ENCODE measurements at regions of chr1 and their contacts with region 1.

Region 1: GRCh38 chr1:36099681-36100341 is 11.1 kb downstream of the ADPRS start:
- DNase-seq: peak; percentile 76 to 90 (median 88)
- ATAC-seq: peak; percentile 94
- H3K4me3 ChIP-seq: no peak overlapping the region
- H3K4me1 ChIP-seq: no peaks in the 10 kb centered on the region
- CTCF ChIP-seq: peak; percentile 42

Region 2: GRCh38 chr1:36149237-36149972 is 49.6 kb after region 1 on chr1 and contains the start of gene TRAPPC3:
- intact Hi-C with region 1: loop called in 1 of 2 experiments (anchors 10 kb)
- DNase-seq: peak; percentile 100
- ATAC-seq: peak; percentile 93
- H3K4me3 ChIP-seq: peak within 1 kb of the TSS; percentile 79
- H3K4me1 ChIP-seq: peaks cover 34% of the 10 kb centered on the region
- CTCF ChIP-seq: peak; percentile 89
- total RNA-seq, gene TRAPPC3: 55.7 to 86.6 (median 57.7) TPM

Region 3: GRCh38 chr1:36187800-36188593 is 88.2 kb after region 1 on chr1:
- intact Hi-C with region 1: loop called in 1 of 2 experiments (anchors 5 kb)
- DNase-seq: peak; percentile 78 to 90 (median 83)
- ATAC-seq: peak; percentile 99
- H3K4me3 ChIP-seq: no peak overlapping the region
- H3K4me1 ChIP-seq: no peaks in the 10 kb centered on the region
- CTCF ChIP-seq: peak; percentile 68

Region 4: DNA sequence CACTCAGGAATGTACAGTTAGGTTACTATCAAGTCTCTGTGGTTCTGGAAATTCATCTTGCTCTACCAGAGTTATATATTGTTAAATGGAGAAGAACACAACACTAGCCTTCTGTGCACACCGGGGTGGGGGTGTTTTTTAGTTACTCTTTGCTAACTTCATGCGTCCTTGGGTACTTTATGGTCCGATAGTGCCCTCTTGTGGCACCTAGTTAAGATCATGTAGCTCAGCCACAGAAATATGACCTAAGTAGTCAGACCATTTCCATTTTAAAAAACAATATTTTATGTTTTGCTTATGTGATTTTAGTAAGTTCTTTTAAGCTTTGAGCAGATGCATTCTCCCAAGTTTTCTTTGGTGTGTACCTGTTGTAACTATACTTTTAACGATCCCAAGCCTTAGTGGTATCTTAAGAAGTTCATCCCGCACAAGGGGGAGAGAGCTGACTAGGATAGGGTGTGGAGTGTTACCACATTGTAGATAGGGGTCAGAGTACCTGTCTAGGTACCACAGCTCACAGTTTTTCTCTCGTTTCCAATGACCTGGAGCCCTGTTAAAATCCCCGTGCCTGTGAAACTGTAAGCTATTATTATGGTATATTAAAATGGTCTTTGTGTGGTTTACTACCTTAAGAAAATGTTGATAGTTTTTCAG is 185.8 kb after region 1 on chr1:
- intact Hi-C with region 1: loop called in 1 of 2 experiments (anchors 10 kb)
- DNase-seq: peak in 1 of 3 donors; percentile 93
- ATAC-seq: peak; percentile 93
- H3K4me3 ChIP-seq: no peak overlapping the region
- H3K4me1 ChIP-seq: no peaks in the 10 kb centered on the region
- CTCF ChIP-seq: peak; percentile 23

Region 5: DNA sequence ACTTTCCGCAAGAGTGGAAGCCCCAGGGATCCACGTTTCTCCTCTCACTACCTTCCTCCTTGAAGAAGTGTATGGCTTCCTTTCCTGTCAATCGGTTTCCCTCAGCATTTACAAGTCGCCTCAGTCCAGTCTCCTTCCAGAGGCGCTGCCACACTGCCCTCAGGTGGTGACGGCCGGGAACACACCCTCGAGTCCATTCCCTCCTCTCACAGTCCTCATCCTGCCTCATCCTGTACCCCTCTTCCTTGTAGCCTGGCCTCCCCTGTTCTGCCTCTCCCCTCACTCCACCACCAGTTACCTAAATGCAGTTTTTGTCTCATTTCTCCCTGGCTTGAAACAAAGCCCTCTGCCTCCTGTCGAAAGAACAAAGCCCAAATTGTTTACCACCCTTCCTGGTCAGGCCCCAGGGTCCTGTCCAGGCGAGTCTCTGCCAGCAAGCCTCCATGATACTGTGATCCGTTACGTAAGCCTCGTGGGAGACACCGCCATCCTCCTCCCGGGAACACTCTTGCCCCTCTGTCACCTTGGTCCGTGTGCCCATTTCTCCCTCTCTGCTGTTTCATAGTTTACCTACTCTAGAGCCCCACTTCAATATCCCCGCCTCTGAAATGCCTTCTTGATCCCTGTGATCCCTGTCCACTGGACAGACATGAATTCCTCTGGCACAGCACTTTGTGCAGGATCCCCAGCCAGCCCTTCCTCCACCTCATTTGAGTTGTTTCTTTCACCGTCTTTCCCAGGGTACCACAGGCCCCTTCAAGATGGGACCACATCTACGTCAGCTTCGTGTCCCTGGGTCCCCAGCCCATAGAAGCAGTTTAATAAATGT is 321.2 kb after region 1 on chr1:
- intact Hi-C with region 1: loop called in 1 of 2 experiments (anchors 10 kb)
- DNase-seq: peak; percentile 88 to 95 (median 94)
- ATAC-seq: peak; percentile 99
- H3K4me3 ChIP-seq: no peak overlapping the region
- H3K4me1 ChIP-seq: peaks cover 2% of the 10 kb centered on the region
- CTCF ChIP-seq: peak; percentile 87